K562 (cell line): ENCODE measurements at regions of chr15 and their contacts with region 1.

Region 1: GRCh38 chr15:64122936-64123351 is 27.2 kb downstream of the SNX1 start:
- DNase-seq: no peak
- ATAC-seq: no peak
- H3K4me3 ChIP-seq: no peak overlapping the region
- H3K27ac ChIP-seq: no peak overlapping the region
- H3K4me1 ChIP-seq: no peaks in the 10 kb centered on the region
- H3K27me3 ChIP-seq: no peaks in the 10 kb centered on the region
- CTCF ChIP-seq: no peak
- EP300 ChIP-seq: no peak
- POLR2A ChIP-seq: no peak
- RAD21 ChIP-seq: no peak

Region 2: DNA sequence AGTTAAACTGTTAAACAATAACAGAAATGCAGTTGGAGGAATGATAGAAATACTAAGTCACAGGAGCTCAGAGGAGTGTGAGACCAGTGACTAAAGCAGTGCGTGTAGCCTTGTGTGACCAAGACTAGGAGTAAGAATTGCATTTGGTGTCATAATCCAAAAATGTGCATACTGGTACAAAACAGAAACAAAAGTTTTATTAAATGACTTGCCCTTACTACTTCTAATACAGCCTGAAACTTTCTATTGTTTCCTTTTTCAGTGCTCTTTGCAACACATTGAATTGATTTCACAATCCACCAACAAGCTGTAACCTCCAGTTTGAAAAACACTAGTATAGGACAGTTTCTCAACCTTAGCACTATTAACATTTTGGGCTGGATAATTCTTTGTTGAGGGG is 10.0 kb before region 1 on chr15:
- CTCF ChIA-PET with region 1: no interaction called
- POLR2A ChIA-PET with region 1: interaction called, 11 read pairs
- in situ Hi-C with region 1: no loop called
- intact Hi-C with region 1: no loop called
- DNase-seq: no peak
- ATAC-seq: no peak
- H3K4me3 ChIP-seq: no peak overlapping the region
- H3K27ac ChIP-seq: no peak overlapping the region
- H3K4me1 ChIP-seq: peaks cover 3 to 4% of the 10 kb centered on the region in 2 experiments; a peak in 3 of 5 replicates
- H3K27me3 ChIP-seq: no peaks in the 10 kb centered on the region
- CTCF ChIP-seq: no peak
- EP300 ChIP-seq: no peak
- POLR2A ChIP-seq: no peak
- RAD21 ChIP-seq: no peak